ENCODE measurements at regions of chr3 and their contacts with region 1.

Region 1: DNA sequence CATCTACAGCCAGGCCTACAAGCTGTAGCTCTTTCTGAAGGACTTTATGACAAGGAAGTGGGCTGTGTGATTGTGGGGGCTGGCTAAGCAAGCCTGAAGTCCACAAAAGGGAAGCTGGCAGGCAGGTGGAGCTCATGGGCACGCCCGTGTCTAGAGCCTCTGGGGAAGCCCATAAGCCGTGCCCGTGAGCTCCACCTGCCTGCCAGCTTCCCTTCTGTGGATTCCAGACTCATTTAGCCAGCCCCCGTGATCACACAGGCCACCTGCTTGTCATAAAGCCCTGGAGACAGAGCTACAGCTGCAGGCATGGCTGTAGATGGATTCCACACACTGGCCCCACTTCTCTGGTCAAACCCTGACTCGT is 15.2 kb downstream of the EFCC1 start:
- DNase-seq: peak; percentile 86
- ATAC-seq: peak; percentile 84
- H3K4me3 Mint-ChIP-seq: peak overlapping the region; percentile 66
- H3K27ac Mint-ChIP-seq: peak overlapping the region; percentile 95
- H3K4me1 Mint-ChIP-seq: peaks cover 38% of the 10 kb centered on the region
- H3K27me3 Mint-ChIP-seq: no peaks in the 10 kb centered on the region

Region 2: GRCh38 chr3:129003578-129004160 is 12.7 kb before region 1 on chr3:
- CTCF ChIA-PET with region 1: interaction called, 66 read pairs
- DNase-seq: peak; percentile 53
- ATAC-seq: peak; percentile 75
- H3K4me3 Mint-ChIP-seq: no peak overlapping the region
- H3K27ac Mint-ChIP-seq: no peak overlapping the region
- H3K4me1 Mint-ChIP-seq: peaks cover 33% of the 10 kb centered on the region
- H3K27me3 Mint-ChIP-seq: peaks cover 48% of the 10 kb centered on the region

Region 3: DNA sequence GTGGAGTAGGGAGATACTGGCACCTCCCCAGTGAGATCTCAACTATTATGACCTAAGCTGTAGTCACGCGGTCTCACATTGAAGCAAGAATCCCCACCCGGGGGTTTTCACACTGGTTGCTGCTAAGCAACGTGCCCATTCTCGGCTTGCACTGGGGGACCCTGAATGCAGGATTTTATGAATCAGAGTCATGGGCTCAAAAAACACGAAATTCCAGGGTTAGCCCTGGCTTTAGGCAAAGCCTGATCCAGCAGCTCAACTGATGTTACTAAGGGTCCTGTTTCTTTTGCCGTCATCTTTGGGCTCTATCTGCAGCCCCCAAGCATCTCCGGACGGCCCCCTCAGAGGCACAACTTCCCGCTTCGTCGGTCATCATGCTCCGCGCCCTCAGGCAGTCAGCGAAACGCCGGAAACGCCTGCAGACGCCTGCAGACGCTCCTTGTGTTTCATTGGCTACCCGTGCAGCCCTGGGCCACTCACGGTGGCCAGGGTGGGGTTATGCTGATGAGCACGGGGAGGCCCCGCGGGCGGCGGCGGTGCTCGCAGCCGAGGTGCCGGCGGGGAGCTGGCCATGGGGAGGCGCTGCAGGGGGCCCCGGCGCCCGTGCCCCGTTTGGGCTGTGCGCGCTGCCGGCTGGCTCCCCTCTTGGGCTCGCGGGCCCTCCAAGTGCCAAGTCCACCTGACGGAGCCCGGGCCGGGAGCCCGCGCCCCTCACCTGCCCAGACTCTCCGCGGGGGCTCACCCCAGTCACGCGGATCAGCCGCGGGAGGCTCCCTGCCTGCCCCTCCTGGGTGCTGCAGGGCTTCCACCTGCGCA is 10.6 kb after region 1 on chr3:
- CTCF ChIA-PET with region 1: interaction called, 111 read pairs
- DNase-seq: peak; percentile 97
- ATAC-seq: peak; percentile 100
- H3K4me3 Mint-ChIP-seq: peak overlapping the region; percentile 80
- H3K27ac Mint-ChIP-seq: peak overlapping the region; percentile 96
- H3K4me1 Mint-ChIP-seq: peaks cover 24% of the 10 kb centered on the region
- H3K27me3 Mint-ChIP-seq: peaks cover 6% of the 10 kb centered on the region

Measured in activated CD8-positive, alpha-beta memory T cell treated with anti-CD3 and anti-CD28 coated beads, Interleukin-2, amount 10 ng/mL, durations not matched to agents 7 days and 5 days (primary cell).